ENCODE measurements at regions of chr3 and their contacts with region 1.

Region 1: DNA sequence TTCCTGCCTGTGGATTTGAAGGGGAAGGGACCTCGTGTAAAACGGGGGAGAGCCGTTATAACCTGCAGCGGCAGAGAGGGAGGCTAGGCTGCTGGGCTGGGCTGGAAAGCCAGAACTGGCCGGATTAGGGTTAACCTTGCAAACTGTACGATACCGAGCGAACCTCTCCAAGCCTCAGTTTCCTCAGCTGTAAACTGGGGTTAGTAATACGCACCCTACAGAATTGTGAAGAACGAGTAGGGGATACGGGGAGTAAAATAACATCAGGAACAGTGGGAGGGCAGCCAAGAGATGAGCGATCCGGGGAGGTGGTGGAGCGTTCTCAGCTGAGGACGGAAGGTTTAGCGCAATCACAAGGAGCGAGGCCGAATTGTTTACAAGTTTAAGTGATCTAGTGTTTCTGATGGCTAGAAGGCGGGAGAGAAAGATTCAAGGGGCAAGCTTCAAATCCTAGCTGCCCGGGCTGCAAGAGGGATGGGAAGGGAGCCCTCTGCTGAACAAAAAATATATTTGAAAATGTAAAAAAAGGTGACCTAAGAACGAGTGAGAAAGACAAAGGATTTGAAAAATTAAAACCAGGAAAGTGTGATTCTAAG is 768 bp upstream of the SEMA5B start:
- DNase-seq: peak; percentile 27 to 63 (median 43)
- H3K4me3 ChIP-seq: peak overlapping the region in 2 of 4 donors; percentile 36 to 69
- H3K27ac ChIP-seq: no peak overlapping the region
- H3K4me1 ChIP-seq: peaks cover 20 to 32% of the 10 kb centered on the region in 2 donors
- H3K27me3 ChIP-seq: no peaks in the 10 kb centered on the region
- CTCF ChIP-seq: peak; percentile 24 to 63 (median 52)
- POLR2A ChIP-seq: no peak

Region 2: DNA sequence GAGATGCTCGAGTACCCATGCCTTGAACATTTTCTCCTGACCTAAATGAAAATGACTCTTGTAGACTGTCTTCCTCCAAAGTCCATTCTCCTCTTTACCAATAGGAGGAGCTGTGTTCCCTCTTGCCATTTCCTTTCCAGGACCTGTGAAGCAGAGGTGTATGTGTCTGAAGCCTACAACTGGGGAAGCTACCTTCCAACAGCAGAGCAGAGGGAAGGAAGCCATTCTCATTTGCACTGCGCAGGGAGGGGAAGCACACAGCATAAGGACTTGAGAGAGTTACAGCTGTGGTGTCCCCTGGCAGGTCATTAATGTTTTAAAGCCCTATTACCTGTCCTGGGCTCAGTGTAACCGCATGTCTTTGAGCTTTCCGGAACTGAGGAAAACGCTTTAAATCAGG is 273.4 kb before region 1 on chr3:
- intact Hi-C with region 1: loop called in 1 of 2 experiments (anchors 10 kb)
- DNase-seq: peak in 1 of 7 donors; percentile 27
- H3K4me3 ChIP-seq: no peak overlapping the region
- H3K27ac ChIP-seq: no peak overlapping the region
- H3K4me1 ChIP-seq: peaks cover 0 to 4% of the 10 kb centered on the region in 2 donors
- H3K27me3 ChIP-seq: no peaks in the 10 kb centered on the region
- CTCF ChIP-seq: peak; percentile 53 to 77 (median 70)
- POLR2A ChIP-seq: no peak

Region 3: DNA sequence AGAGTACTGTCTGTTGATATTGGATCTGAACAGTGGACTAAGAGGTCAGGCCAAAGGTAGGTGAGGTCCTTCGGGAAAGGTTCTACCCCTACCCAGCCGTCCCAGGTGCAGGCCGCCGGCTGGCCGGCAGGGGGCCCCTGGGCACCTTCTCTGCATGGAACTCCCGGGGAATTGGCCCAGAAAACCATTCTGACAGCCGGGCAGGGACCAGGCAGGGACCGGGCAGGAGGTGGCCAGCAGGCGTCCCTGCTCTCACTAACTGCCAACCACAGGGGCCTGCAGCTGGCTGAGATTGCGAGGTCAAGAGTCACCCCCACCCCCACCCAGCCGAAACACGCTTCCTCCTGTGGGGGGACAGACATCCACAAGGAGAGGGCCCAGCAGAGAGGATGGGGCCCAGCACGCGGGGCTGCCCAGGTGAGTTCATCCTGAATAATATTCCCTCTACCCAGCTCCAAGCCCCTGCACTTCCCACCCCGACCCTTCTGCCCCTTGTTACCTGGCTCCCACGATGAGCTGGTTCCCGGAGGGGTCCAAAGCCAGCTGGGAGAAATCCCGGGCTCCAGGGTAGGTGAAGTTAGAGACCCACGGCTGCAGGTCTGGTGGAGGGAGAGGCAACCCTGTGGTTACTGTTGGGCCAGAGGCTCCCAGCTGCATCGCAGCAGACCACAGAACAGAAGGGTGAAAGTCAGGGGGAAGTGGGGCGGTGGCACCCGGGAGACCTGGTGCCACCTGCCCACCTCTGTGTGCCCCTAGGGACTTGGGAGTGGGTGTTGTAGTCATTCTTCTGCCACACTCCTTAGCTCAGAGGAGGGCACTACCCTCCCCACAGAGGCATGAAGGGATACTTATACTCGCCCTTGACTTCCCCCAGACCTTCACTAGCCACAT is 85.1 kb before region 1 on chr3:
- intact Hi-C with region 1: loop called (anchors 5 kb)
- DNase-seq: peak; percentile 76 to 87 (median 82)
- H3K4me3 ChIP-seq: no peak overlapping the region
- H3K27ac ChIP-seq: no peak overlapping the region
- H3K4me1 ChIP-seq: peaks cover 0 to 11% of the 10 kb centered on the region in 2 donors
- H3K27me3 ChIP-seq: no peaks in the 10 kb centered on the region
- CTCF ChIP-seq: peak; percentile 85 to 94 (median 90)
- POLR2A ChIP-seq: no peak

Region 4: GRCh38 chr3:123143669-123144411 is 115.5 kb after region 1 on chr3:
- intact Hi-C with region 1: no loop called
- DNase-seq: peak in 6 of 7 donors; percentile 63 to 76 (median 74)
- H3K4me3 ChIP-seq: no peak overlapping the region
- H3K27ac ChIP-seq: peak overlapping the region in 4 of 5 donors; percentile 3 to 21 (median 12)
- H3K4me1 ChIP-seq: peaks cover 9 to 13% of the 10 kb centered on the region in 2 donors
- H3K27me3 ChIP-seq: no peaks in the 10 kb centered on the region
- CTCF ChIP-seq: no peak
- POLR2A ChIP-seq: no peak

Region 5: DNA sequence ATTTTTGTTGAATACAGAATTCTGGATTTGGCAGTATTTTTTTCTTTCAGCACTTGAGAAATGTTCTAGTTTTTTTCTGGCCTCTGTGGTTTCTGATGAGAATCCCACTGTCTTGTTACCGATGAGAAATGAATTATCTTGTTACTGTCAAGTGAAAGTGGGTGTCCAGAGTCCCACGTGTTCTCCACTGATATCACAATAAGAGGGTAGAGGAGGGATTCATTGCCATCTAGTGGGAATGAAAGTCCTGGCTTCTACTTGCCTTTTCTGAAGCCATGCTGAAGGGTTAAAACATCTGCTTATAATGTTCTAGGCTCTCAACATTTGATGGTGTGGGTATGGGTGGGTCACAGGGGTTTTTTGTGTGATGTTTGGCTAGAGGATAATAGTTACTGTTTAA is 239.5 kb after region 1 on chr3:
- intact Hi-C with region 1: loop called in 1 of 2 experiments (anchors 10 kb)
- DNase-seq: no peak
- H3K4me3 ChIP-seq: no peak overlapping the region
- H3K27ac ChIP-seq: no peak overlapping the region
- H3K4me1 ChIP-seq: no peaks in the 10 kb centered on the region
- H3K27me3 ChIP-seq: no peaks in the 10 kb centered on the region
- CTCF ChIP-seq: no peak
- POLR2A ChIP-seq: no peak

Region 6: GRCh38 chr3:123365450-123366143 is 337.3 kb after region 1 on chr3:
- intact Hi-C with region 1: no loop called
- DNase-seq: peak in 4 of 7 donors; percentile 27 to 59 (median 37)
- H3K4me3 ChIP-seq: no peak overlapping the region
- H3K27ac ChIP-seq: no peak overlapping the region
- H3K4me1 ChIP-seq: no peaks in the 10 kb centered on the region
- H3K27me3 ChIP-seq: no peaks in the 10 kb centered on the region
- CTCF ChIP-seq: peak; percentile 11 to 54 (median 44)
- POLR2A ChIP-seq: no peak